ENCODE measurements at regions of chr9 and their contacts with region 1.

Region 1: DNA sequence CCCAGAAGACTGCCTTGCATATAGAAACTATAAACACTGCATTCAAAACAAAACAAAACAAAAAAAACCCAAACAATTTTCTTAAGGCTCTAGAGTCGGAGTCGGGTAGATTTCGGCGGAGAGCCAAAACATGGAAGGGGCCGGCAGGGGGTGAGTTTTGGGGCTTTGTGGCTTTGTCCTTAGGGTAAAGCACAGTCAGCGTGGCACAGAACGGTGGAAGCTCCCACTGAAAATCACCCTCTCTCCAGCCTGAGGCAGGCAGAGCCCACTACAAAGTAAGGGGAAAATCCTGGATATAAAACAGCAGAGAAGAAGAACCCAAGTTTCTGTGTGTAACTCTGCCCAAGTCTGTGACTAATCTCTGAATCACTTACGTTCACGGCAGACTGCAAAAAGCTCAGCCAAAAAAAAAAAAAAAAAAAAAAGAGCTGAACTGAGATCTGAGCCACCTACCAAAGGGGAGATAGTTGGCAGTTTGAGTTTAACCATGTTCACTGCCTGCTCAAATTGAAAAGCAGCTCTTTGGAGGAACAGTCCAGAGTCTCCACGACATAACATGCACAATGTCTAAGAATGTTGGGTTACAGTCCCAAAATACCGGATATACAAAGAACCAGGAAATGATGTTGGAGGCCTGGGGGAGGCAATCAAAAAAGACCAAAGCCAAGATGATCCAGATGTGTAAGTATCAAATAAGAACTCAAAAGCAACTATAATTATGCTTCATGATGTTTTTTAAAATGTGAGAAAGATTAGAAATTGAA is 26.6 kb upstream of the OR2K2 start:
- DNase-seq: peak; percentile 80
- ATAC-seq: peak; percentile 86
- H3K4me3 ChIP-seq: peak overlapping the region; percentile 18; the same call in 1 of the 2 replicates
- H3K27ac ChIP-seq: peak overlapping the region; percentile 69
- H3K4me1 ChIP-seq: peaks cover 20% of the 10 kb centered on the region
- H3K27me3 ChIP-seq: no peaks in the 10 kb centered on the region
- CTCF ChIP-seq: no peak

Region 2: GRCh38 chr9:110116543-110116885 is 1240.1 kb before region 1 on chr9:
- CTCF ChIA-PET with region 1: no interaction called
- POLR2A ChIA-PET with region 1: no interaction called
- intact Hi-C with region 1: no loop called
- DNase-seq: peak; percentile 17
- ATAC-seq: no peak
- H3K4me3 ChIP-seq: no peak overlapping the region
- H3K27ac ChIP-seq: no peak overlapping the region
- H3K4me1 ChIP-seq: peaks cover 4% of the 10 kb centered on the region; the same call in 1 of the 2 replicates
- H3K27me3 ChIP-seq: no peaks in the 10 kb centered on the region
- CTCF ChIP-seq: no peak

Region 3: DNA sequence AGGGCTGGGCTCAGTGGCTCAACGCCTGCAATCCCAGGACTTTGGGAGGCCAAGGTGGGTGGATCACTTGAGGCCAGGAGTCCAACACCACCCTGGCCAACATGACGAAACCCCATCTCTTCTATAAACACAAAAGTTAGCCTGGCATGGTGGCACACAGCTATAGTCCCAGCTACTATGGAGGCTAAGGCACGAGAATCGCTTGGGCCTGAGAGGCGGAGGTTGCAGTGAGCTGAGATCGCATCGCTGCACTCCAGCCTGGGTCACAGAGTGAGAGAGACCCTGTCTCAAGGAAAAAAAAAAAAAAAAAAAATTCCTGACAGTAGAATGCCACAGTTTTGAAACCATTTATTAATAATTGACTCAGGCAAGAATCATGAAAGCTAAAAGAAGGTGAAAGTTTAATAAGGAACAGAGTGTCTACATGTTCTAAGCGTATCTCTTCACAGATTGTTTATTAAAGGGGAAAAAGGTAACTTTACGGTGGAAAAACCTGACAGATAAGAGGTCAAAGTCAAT is 248.4 kb after region 1 on chr9:
- CTCF ChIA-PET with region 1: no interaction called
- POLR2A ChIA-PET with region 1: interaction called, 10 read pairs
- intact Hi-C with region 1: no loop called
- DNase-seq: no peak
- ATAC-seq: no peak
- H3K4me3 ChIP-seq: no peak overlapping the region
- H3K27ac ChIP-seq: no peak overlapping the region
- H3K4me1 ChIP-seq: peaks cover 11% of the 10 kb centered on the region
- H3K27me3 ChIP-seq: no peaks in the 10 kb centered on the region
- CTCF ChIP-seq: no peak